Activated CD8-positive, alpha-beta T cell treated with anti-CD3 and anti-CD28 coated beads for 36 hours (primary cell): ENCODE measurements at regions of chr18 and their contacts with region 1.

Region 1: DNA sequence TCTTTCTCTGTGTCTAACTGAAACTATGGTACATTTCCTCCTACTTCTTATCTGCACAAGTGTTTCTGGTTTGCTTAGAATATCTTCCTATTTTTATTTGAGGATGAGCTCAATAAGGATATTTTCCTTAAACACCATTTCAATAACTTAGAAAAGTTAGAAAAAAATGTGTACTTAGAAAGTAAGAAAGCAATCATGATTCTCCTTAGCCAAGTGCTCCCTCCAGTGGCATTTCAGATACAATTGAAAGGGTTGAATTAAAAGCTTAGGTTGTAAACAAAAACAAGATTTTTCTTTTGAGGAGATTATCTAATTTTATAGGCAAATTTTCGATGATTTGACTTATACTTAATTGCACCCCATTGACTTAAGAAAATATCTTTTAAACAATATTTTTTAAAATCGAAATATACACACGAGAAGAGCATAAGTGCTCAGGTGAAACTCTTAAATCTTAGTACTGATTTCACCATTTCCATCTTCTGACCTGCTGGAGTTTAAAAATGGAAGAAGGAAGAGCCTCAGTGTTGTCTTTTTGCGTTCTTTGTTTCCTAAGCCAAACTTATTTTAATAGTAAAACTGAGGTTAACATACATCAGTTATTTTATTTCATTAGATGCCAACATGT is 26.9 kb downstream of the C18orf63 start:
- DNase-seq: peak; percentile 49
- ATAC-seq: no peak
- H3K4me3 Mint-ChIP-seq: no peak overlapping the region
- H3K27ac Mint-ChIP-seq: no peak overlapping the region
- H3K4me1 Mint-ChIP-seq: no peaks in the 10 kb centered on the region
- H3K27me3 Mint-ChIP-seq: peaks cover 2% of the 10 kb centered on the region
- CTCF ChIP-seq: peak; percentile 69

Region 2: GRCh38 chr18:74196220-74197119 is 146.1 kb before region 1 on chr18:
- CTCF ChIA-PET with region 1: interaction called, 49 read pairs
- POLR2A ChIA-PET with region 1: interaction called, 3 read pairs
- intact Hi-C with region 1: loop called (anchors 1 kb)
- DNase-seq: peak; percentile 65
- ATAC-seq: peak; percentile 99
- H3K4me3 Mint-ChIP-seq: peak overlapping the region; percentile 75
- H3K27ac Mint-ChIP-seq: peak overlapping the region; percentile 79
- H3K4me1 Mint-ChIP-seq: peaks cover 4% of the 10 kb centered on the region
- H3K27me3 Mint-ChIP-seq: peaks cover 2% of the 10 kb centered on the region
- CTCF ChIP-seq: peak; percentile 88

Region 3: DNA sequence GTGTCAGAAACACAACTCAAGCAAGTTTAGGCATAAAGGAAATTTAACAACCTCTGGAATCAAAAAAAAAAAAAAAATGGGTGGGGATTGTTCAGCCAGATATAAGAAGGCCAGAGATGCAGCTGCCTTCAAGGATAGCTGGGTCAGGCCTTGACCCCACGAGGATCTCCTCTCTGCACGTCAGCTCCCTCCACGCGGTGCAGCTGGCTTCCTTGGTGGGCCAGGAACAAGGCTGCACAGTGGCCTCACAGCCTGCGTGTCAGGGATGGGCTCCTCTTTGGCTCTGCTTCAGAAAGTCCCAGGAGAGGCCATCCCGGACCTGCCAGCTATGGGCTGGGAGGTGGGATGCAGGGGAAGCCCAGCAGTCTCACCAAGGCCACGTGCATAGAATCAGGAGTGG is 138.7 kb before region 1 on chr18:
- CTCF ChIA-PET with region 1: interaction called, 49 read pairs
- POLR2A ChIA-PET with region 1: interaction called, 3 read pairs
- intact Hi-C with region 1: no loop called
- DNase-seq: no peak
- ATAC-seq: no peak
- H3K4me3 Mint-ChIP-seq: no peak overlapping the region
- H3K27ac Mint-ChIP-seq: no peak overlapping the region
- H3K4me1 Mint-ChIP-seq: no peaks in the 10 kb centered on the region
- H3K27me3 Mint-ChIP-seq: peaks cover 2% of the 10 kb centered on the region
- CTCF ChIP-seq: no peak

Region 4: DNA sequence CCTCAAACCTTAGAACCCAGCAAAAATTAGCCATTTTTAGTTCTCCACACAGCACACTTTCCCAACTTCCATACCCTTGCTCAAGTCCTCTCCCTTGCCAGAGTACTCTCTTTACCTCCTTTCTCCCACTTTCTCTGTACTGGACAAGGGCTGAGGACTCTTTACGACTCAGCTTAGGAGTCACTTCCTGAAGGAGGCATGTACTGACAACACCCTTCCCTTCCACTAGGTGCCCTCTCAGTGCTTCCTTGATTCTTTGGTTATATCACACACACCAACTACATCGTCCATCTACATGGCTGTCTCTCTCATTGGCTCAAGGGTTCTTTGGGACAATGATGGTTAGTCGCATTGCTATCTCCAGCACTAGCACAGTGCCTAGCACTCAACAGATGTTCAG is 32.1 kb before region 1 on chr18:
- CTCF ChIA-PET with region 1: interaction called, 13 read pairs
- POLR2A ChIA-PET with region 1: no interaction called
- intact Hi-C with region 1: no loop called
- DNase-seq: peak; percentile 20
- ATAC-seq: peak; percentile 91
- H3K4me3 Mint-ChIP-seq: no peak overlapping the region
- H3K27ac Mint-ChIP-seq: no peak overlapping the region
- H3K4me1 Mint-ChIP-seq: peaks cover 2% of the 10 kb centered on the region
- H3K27me3 Mint-ChIP-seq: peaks cover 24% of the 10 kb centered on the region
- CTCF ChIP-seq: peak; percentile 42

Region 5: GRCh38 chr18:74353169-74353775 is 10.7 kb after region 1 on chr18:
- CTCF ChIA-PET with region 1: interaction called, 24 read pairs
- POLR2A ChIA-PET with region 1: no interaction called
- intact Hi-C with region 1: no loop called
- DNase-seq: peak; percentile 72
- ATAC-seq: peak; percentile 86
- H3K4me3 Mint-ChIP-seq: no peak overlapping the region
- H3K27ac Mint-ChIP-seq: no peak overlapping the region
- H3K4me1 Mint-ChIP-seq: peaks cover 6% of the 10 kb centered on the region
- H3K27me3 Mint-ChIP-seq: no peaks in the 10 kb centered on the region
- CTCF ChIP-seq: peak; percentile 73

Region 6: GRCh38 chr18:74420481-74420880 is 78.0 kb after region 1 on chr18:
- CTCF ChIA-PET with region 1: no interaction called
- POLR2A ChIA-PET with region 1: no interaction called
- intact Hi-C with region 1: no loop called
- DNase-seq: no peak
- ATAC-seq: no peak
- H3K4me3 Mint-ChIP-seq: no peak overlapping the region
- H3K27ac Mint-ChIP-seq: no peak overlapping the region
- H3K4me1 Mint-ChIP-seq: no peaks in the 10 kb centered on the region
- H3K27me3 Mint-ChIP-seq: no peaks in the 10 kb centered on the region
- CTCF ChIP-seq: no peak

Region 7: GRCh38 chr18:74524097-74524496 is 181.6 kb after region 1 on chr18:
- CTCF ChIA-PET with region 1: no interaction called
- POLR2A ChIA-PET with region 1: no interaction called
- intact Hi-C with region 1: no loop called
- DNase-seq: no peak
- ATAC-seq: no peak
- H3K4me3 Mint-ChIP-seq: no peak overlapping the region
- H3K27ac Mint-ChIP-seq: no peak overlapping the region
- H3K4me1 Mint-ChIP-seq: no peaks in the 10 kb centered on the region
- H3K27me3 Mint-ChIP-seq: no peaks in the 10 kb centered on the region
- CTCF ChIP-seq: no peak

Region 8: DNA sequence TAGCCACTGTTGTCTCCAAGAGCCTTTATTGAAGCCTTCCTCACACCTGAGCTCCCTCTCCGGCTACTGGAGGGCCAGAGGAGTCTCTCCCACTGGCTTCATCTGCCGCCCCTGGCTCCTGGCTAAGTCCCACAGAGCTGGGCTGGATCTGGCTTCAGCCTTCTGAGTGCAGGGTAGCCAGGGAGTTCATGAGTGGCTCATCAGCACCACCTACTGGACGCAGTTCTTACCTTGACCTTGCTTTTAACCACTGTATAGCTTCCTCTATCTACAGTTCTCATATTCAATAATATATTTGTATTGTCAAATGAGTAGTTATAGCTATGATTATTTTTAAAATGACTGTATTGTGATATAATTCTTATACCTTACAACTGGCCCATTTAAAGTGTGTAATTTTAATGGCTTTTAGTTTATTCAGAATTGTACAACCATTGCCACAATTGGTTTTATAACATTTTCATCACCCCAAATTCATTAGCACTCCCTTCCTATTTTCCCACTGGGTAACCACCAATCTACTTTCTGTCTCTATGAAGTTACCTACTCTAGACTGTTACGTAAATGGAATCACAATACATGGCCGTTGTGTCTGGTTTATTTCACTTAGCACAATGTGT is 209.5 kb after region 1 on chr18:
- CTCF ChIA-PET with region 1: interaction called, 13 read pairs
- POLR2A ChIA-PET with region 1: no interaction called
- intact Hi-C with region 1: no loop called
- DNase-seq: peak; percentile 91
- ATAC-seq: peak; percentile 99
- H3K4me3 Mint-ChIP-seq: no peak overlapping the region
- H3K27ac Mint-ChIP-seq: no peak overlapping the region
- H3K4me1 Mint-ChIP-seq: no peaks in the 10 kb centered on the region
- H3K27me3 Mint-ChIP-seq: peaks cover 7% of the 10 kb centered on the region
- CTCF ChIP-seq: peak; percentile 72

Region 9: GRCh38 chr18:74567822-74568221 is 225.3 kb after region 1 on chr18:
- CTCF ChIA-PET with region 1: no interaction called
- POLR2A ChIA-PET with region 1: no interaction called
- intact Hi-C with region 1: no loop called
- DNase-seq: peak; percentile 8
- ATAC-seq: no peak
- H3K4me3 Mint-ChIP-seq: no peak overlapping the region
- H3K27ac Mint-ChIP-seq: no peak overlapping the region
- H3K4me1 Mint-ChIP-seq: no peaks in the 10 kb centered on the region
- H3K27me3 Mint-ChIP-seq: peaks cover 14% of the 10 kb centered on the region
- CTCF ChIP-seq: no peak

Region 10: GRCh38 chr18:74784752-74785151 is 442.2 kb after region 1 on chr18:
- CTCF ChIA-PET with region 1: no interaction called
- POLR2A ChIA-PET with region 1: no interaction called
- intact Hi-C with region 1: no loop called
- DNase-seq: no peak
- ATAC-seq: no peak
- H3K4me3 Mint-ChIP-seq: no peak overlapping the region
- H3K27ac Mint-ChIP-seq: no peak overlapping the region
- H3K4me1 Mint-ChIP-seq: no peaks in the 10 kb centered on the region
- H3K27me3 Mint-ChIP-seq: no peaks in the 10 kb centered on the region
- CTCF ChIP-seq: no peak